ENCODE measurements at regions of chr12 and their contacts with region 1.

Region 1: GRCh38 chr12:124863416-124864325 is at the start of gene SCARB1:
- DNase-seq: peak; percentile 67 to 98 (median 86)

Region 2: DNA sequence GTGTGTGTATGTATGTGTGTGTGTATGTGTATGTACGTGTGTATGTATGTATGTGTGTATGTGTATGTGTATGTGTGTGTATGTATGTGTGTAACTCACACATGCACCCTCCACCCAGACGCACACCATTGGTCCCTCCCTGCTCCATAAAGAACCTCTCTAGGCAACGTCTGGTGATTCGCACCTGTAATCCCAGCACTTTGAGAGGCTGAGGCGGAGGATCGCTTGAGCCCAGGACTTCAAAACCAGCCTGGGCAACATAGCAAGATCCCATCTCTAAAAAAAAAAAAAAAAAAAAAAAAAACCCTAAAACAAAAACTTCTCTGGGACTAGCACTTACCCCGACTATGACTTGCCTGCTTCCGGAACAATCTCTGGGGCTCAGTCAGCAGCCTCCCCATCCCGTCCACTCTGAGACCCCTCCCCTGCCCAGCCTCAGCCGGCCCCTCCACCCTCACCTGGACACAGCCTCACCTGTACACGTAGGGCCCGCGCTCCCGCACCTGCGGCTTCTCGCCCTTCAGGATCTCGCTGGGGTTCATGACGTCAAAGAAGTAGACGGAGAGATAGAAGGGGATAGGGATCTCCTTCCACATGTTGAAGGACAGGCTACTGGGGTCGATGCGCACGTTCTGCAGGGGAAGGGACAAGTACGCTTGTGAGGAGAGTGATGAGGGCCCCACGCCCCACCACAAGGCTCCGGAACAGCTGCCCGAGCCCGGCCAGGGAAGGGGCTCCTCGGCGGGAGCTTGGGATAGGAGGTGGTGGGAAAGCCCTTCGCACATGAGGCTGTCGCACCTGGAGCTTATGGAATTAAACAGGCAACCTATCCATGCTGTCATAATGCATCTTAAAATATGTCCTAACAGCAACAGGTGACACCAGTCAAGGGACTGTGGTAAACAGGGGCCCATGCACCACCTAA is 46.3 kb before region 1 on chr12:
- intact Hi-C with region 1: no loop called
- DNase-seq: no peak

Region 3: GRCh38 chr12:124828264-124829007 is 35.2 kb before region 1 on chr12:
- intact Hi-C with region 1: no loop called
- DNase-seq: peak in 5 of 10 donors; percentile 27 to 90 (median 46)

Region 4: DNA sequence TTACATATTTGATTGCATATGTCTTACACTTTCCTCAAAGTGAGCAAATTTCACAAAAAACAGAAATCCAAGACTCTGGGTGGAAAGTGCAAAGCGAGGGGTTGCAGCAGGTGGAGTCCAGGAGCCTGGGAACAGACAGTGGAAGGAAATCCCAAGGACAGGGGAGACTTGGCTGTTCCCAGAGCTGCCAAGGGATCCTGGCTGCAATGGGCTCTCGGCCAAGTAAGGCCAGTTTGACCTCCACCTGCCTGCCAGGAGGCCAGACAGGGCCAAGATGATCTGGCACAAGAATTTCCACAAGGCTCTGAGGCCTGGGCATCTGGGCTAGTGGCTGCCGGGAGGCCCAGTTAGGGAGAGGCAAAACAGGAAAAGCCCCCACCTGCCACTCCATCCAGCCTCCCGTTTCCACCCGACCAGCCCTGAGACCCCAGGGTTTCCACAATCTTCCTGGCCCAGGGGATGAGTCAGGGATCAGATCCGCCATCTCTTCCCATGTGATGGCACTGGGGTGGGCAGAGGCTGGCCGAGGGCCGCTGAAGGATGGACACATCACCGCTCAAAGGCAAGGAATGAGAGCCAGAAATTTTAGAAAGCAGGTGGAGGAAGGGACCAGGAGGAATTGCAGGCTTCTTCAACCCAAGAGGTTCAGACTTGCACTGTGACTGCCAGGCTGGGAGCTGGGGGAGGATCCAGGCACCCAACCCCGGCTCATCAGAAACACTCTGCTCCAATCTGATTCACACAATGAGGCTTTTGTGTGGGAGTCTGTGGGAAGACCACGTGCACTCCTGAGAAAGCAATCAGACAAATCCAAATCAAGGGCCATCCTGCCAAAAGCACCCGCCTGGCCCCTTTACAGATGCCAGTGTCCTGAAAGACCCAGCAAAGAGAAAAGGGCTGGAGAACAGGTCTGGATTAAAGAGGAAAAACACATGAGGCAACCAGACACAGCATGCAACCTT is 16.3 kb before region 1 on chr12:
- intact Hi-C with region 1: loop called (anchors 2 kb)
- DNase-seq: peak; percentile 75 to 97 (median 83)

Region 5: DNA sequence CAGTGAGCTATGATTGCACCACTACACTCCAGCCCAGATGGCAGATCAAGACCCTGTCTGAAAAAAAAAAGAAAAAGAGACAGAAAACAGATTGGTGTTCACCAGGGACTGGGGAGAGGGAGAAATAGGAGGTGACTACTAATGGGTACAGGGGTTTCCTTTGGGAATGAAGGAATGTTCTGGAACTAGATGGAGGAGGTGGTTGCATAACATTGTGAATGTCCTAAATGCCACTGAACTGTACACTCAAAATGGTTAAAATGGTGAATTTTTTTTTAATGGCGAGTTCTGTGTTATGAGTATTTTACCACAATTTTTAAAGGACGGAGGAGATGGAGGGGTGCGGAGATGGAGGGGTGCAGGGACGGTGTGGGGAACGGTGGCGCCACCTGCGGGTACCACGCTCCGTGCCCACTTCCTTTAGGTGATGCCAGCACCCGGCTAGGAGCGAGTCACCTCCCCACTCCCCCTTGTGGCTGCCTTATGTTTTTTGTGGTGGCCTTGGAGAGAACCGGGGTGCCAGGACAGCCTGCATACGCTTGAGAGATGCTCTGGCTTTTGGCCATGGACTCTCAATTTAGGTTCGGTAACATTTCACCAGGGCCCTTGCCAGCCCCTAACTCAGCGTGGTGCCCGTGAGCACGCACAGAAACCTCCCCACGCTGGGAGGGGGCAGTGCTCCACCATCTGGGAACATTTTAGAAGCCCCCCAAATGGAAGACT is 34.7 kb after region 1 on chr12:
- intact Hi-C with region 1: loop called (anchors 5 kb)
- DNase-seq: peak in 9 of 10 donors; percentile 45 to 91 (median 78)

Region 6: GRCh38 chr12:124952801-124953200 is 89.1 kb after region 1 on chr12:
- intact Hi-C with region 1: no loop called
- DNase-seq: no peak

Region 7: DNA sequence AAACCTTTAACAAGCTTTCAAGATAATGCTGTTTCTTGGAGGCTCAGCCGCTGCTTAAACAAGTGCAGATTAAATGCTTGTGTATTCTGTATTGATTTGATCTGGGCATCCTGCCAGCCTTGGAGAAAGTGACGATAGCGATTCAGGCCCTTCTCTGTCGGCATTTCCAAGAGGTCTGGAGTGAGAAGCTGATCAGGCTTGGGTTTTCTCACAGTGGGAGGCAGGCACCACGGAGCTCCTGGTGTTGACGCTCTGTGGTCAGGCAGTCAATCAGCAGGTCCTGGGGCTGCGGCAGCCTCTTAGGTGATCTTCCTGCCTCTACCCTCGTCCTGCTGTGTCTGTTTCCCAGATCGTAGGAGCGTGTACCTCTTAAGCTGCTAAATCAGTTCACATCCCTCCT is 356.7 kb after region 1 on chr12:
- intact Hi-C with region 1: no loop called
- DNase-seq: peak in 1 of 10 donors; percentile 21